WTC11 (cell line): ENCODE measurements at regions of chr5 and their contacts with region 1.

Region 1: GRCh38 chr5:132495667-132496190 is 5.2 kb upstream of the IRF1 start:
- DNase-seq: peak; percentile 75
- ATAC-seq: peak; percentile 14
- H3K4me3 Mint-ChIP-seq: peak overlapping the region; percentile 85
- H3K27ac Mint-ChIP-seq: peak overlapping the region; percentile 82; the same call in 1 of the 2 replicates
- H3K4me1 Mint-ChIP-seq: peaks cover 23% of the 10 kb centered on the region
- H3K27me3 Mint-ChIP-seq: peaks cover 23% of the 10 kb centered on the region
- CTCF ChIP-seq: no peak

Region 2: GRCh38 chr5:132386644-132387286 is 109.0 kb before region 1 on chr5:
- CTCF ChIA-PET with region 1: interaction called, 62 read pairs
- POLR2A ChIA-PET with region 1: interaction called, 4 read pairs
- DNase-seq: peak; percentile 74
- ATAC-seq: peak; percentile 95
- H3K4me3 Mint-ChIP-seq: no peak overlapping the region
- H3K27ac Mint-ChIP-seq: no peak overlapping the region
- H3K4me1 Mint-ChIP-seq: peaks cover 8% of the 10 kb centered on the region
- H3K27me3 Mint-ChIP-seq: no peaks in the 10 kb centered on the region
- CTCF ChIP-seq: peak; percentile 46; the same call in 1 of the 2 replicates

Region 3: GRCh38 chr5:132419502-132420468 is 75.9 kb before region 1 on chr5:
- CTCF ChIA-PET with region 1: interaction called, 16 read pairs
- POLR2A ChIA-PET with region 1: interaction called, 3 read pairs
- DNase-seq: peak; percentile 77
- ATAC-seq: peak; percentile 92
- H3K4me3 Mint-ChIP-seq: no peak overlapping the region
- H3K27ac Mint-ChIP-seq: peak overlapping the region; percentile 67; the same call in 1 of the 2 replicates
- H3K4me1 Mint-ChIP-seq: peaks cover 20% of the 10 kb centered on the region
- H3K27me3 Mint-ChIP-seq: no peaks in the 10 kb centered on the region; the same call in 1 of the 2 replicates
- CTCF ChIP-seq: peak; percentile 86

Region 4: DNA sequence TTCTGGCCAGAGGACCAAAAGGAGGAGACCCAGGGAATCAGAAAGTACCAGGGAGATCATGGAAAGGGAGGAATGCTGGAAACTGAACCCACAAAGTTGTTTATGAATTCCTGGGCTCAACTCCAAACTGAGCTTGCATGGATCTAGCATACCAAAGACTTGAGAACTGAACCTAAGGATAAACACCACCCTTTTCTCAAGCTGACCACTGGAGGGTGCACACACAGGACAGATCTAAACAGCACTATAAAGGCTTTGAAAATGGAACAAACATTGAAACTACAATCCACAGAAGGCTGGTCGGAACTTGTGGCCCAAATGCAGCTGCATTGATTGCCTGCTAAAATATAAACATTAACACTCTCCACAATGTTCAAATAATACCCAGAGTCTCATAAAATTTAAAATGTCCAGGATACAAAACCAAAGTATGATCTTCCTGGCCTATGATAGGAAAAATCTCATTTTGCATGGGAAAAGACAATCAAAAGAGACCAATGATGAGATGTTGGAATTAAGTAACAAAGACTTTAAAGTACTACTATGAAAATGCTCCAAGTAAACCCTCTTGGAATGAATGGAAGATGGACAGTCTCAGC is 10.5 kb after region 1 on chr5:
- CTCF ChIA-PET with region 1: interaction called, 23 read pairs
- POLR2A ChIA-PET with region 1: interaction called, 4 read pairs
- DNase-seq: no peak
- ATAC-seq: peak; percentile 72
- H3K4me3 Mint-ChIP-seq: no peak overlapping the region
- H3K27ac Mint-ChIP-seq: 0 out of 2 replicates have a peak overlapping the region, but pooled peaks have one; percentile 24
- H3K4me1 Mint-ChIP-seq: peaks cover 8% of the 10 kb centered on the region; the same call in 1 of the 2 replicates
- H3K27me3 Mint-ChIP-seq: no peaks in the 10 kb centered on the region; the same call in 1 of the 2 replicates
- CTCF ChIP-seq: no peak

Region 5: DNA sequence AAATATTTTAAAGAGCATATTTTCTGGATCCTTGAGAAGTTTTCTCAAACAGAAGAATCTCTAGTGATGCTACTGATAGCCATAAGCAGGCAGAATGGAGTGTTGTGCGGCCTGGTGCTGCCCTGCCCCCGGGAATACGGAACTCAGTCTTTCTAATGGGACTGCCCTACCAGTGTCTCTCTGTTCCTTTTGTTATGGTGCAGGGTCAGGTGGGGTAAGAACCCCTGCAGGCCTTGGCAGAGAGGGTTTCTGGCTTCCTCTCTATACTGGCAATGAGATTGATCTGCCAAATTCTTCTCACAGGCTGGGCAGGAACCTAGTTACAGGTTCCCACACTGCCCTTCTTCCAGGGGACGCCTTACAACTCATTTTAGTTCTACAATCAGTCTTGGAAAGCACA is 45.0 kb after region 1 on chr5:
- CTCF ChIA-PET with region 1: no interaction called
- POLR2A ChIA-PET with region 1: no interaction called
- DNase-seq: no peak
- ATAC-seq: peak; percentile 71
- H3K4me3 Mint-ChIP-seq: no peak overlapping the region
- H3K27ac Mint-ChIP-seq: no peak overlapping the region
- H3K4me1 Mint-ChIP-seq: 0 out of 2 replicates have a peak, but pooled peaks cover 4% of the 10 kb centered on the region
- H3K27me3 Mint-ChIP-seq: peaks cover 7% of the 10 kb centered on the region; the same call in 1 of the 2 replicates
- CTCF ChIP-seq: no peak